AG04449 (cell line): ENCODE measurements at regions of chr4 and their contacts with region 1.

Region 1: GRCh38 chr4:141654098-141654497 is 17.7 kb downstream of the IL15 start:
- DNase-seq: no peak
- H3K4me3 ChIP-seq: no peak overlapping the region
- CTCF ChIP-seq: peak; percentile 32

Region 2: DNA sequence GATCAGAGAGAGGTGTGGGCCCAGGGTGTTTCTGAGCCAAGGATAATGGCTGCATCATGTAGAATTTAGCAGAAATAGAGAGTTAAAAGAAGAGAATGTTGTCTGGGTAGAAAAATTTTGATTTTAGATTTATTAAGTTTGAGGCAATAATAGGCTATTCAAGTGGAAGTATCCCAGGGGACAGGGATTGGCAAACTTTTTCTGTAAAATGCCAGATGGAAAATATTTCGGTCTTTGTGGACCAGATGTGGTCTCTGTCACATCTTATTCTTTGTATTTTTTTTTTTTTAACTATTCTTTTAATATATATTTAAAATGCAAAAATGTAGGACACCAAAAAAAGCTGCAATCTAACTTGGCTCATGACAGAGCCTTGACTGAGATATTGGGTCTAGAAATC is 15.4 kb after region 1 on chr4:
- CTCF ChIA-PET with region 1: interaction called, 15 read pairs
- POLR2A ChIA-PET with region 1: no interaction called
- DNase-seq: no peak
- H3K4me3 ChIP-seq: no peak overlapping the region
- CTCF ChIP-seq: no peak

Region 3: GRCh38 chr4:141802333-141802732 is 148.2 kb after region 1 on chr4:
- CTCF ChIA-PET with region 1: no interaction called
- POLR2A ChIA-PET with region 1: no interaction called
- DNase-seq: peak; percentile 74
- H3K4me3 ChIP-seq: no peak overlapping the region
- CTCF ChIP-seq: no peak